Activated CD4-positive, alpha-beta memory T cell treated with anti-CD3 and anti-CD28 coated beads for 36 hours (primary cell): ENCODE measurements at regions of chr14 and their contacts with region 1.

Region 1: DNA sequence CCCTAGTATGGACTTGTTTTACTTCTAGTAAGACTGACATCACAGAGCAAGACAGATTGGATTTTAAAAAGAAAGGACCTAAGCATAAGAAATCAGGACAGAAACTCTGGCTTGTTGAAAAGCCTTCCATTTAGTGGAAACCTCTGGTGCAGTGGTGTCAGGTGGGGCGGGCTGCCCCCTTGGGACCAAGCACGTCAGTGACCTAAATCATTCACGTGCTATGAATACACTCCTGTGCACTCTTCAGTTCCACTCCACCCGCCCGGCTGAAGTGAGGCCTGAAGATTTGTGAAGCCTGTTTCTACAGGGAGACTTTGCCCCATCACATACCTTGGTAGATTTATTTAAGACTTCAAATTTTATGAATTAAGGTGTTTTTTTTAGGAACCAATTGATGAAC is 58.2 kb upstream of the STRN3 start:
- DNase-seq: no peak
- H3K4me3 Mint-ChIP-seq: no peak overlapping the region
- H3K27ac Mint-ChIP-seq: no peak overlapping the region
- H3K4me1 Mint-ChIP-seq: no peaks in the 10 kb centered on the region
- H3K27me3 Mint-ChIP-seq: no peaks in the 10 kb centered on the region

Region 2: GRCh38 chr14:30974628-30975027 is 109.8 kb before region 1 on chr14:
- CTCF ChIA-PET with region 1: interaction called, 23 read pairs
- POLR2A ChIA-PET with region 1: no interaction called
- intact Hi-C with region 1: no loop called
- DNase-seq: no peak
- H3K4me3 Mint-ChIP-seq: no peak overlapping the region
- H3K27ac Mint-ChIP-seq: no peak overlapping the region
- H3K4me1 Mint-ChIP-seq: peaks cover 44% of the 10 kb centered on the region
- H3K27me3 Mint-ChIP-seq: no peaks in the 10 kb centered on the region

Region 3: DNA sequence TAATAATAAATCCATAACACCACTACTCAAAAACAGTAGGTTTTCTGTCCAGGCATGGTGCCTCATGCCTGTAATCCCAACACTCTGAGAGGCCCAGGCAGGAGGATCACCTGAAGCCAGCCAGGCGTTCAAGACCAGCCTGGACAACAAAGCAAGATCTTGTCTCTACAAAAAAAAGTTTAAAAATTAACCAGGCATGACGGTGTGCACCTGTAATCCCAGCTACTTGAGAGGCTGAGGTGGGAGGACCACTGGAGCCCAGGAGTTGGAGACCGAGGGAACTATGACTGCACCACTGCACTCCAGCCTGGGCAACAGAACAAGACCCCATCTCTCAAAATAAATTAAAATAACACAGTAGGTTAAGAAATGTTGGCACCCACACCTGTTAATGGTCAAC is 103.4 kb before region 1 on chr14:
- CTCF ChIA-PET with region 1: interaction called, 23 read pairs
- POLR2A ChIA-PET with region 1: no interaction called
- intact Hi-C with region 1: loop called (anchors 1 kb)
- DNase-seq: no peak
- H3K4me3 Mint-ChIP-seq: no peak overlapping the region
- H3K27ac Mint-ChIP-seq: no peak overlapping the region
- H3K4me1 Mint-ChIP-seq: peaks cover 11% of the 10 kb centered on the region
- H3K27me3 Mint-ChIP-seq: no peaks in the 10 kb centered on the region

Region 4: GRCh38 chr14:31142455-31143087 is 58.2 kb after region 1 on chr14:
- CTCF ChIA-PET with region 1: no interaction called
- POLR2A ChIA-PET with region 1: no interaction called
- intact Hi-C with region 1: no loop called
- DNase-seq: no peak
- H3K4me3 Mint-ChIP-seq: no peak overlapping the region
- H3K27ac Mint-ChIP-seq: no peak overlapping the region
- H3K4me1 Mint-ChIP-seq: no peaks in the 10 kb centered on the region
- H3K27me3 Mint-ChIP-seq: no peaks in the 10 kb centered on the region